Left colon (tissue), 2 donors: ENCODE measurements at regions of chrX and their contacts with region 1.

Region 1: DNA sequence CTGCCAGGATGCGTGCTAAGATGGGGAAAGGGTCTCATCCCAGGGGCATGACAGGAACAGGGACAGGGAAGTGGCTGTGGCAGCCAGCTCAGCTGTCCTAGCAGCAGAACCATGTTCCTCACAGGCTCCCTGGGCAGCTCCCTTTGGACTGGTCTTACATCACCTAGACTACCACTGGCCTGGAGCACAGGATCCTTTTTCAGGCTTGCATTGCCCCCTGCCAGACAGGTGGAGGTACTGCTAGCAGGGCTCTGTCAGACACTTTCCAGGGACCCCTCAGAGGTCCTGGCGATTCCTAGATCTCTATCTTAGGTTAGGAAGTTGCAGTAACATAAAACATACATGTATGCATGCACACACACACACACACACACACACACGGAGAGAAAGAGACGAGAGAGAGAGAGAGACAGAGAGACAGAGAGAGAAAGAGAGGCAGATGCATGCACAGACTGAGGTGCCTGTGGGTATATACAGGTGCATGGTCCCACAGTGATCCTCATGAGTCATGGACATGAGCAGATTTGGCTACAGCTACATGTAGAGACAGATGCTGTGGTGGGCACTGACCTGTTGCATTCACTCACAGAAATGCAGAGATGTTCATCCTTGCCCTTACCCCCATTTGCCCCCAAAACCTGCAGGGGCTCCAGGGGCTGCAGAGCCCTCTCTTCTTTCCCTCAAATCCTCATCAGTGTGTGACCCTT is 63.6 kb downstream of the STARD8 start:
- DNase-seq: peak in 1 of 2 donors; percentile 19
- ATAC-seq: peak; percentile 78

Region 2: DNA sequence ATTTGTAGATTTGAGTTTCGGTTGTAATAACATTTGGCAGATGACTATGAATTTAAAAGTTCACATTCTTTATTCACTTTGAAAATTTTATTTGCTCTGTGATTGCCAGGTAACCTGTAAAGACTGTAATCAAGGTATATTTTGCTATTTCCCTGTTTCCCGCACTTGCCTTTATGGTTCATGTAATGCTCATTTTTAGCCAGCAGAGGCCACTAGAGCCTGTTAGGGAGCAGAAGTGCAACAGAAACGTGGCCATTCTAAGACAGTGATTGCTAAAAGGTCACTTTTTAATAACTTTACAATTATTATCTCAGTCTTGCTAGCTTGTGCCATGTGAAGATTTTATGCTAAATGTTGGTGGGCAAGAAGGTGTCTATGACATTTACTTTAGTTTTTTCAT is 199.8 kb before region 1 on chrX:
- intact Hi-C with region 1: loop called in 1 of 2 experiments (anchors 5 kb)
- DNase-seq: no peak
- ATAC-seq: peak; percentile 80

Region 3: GRCh38 chrX:68822641-68823410 is 111.8 kb after region 1 on chrX:
- intact Hi-C with region 1: no loop called
- DNase-seq: peak in 1 of 2 donors; percentile 32
- ATAC-seq: peak; percentile 86